Stomach (tissue), 19 donors: ENCODE measurements at regions of chr4 and their contacts with region 1.

Region 1: GRCh38 chr4:145939856-145940255 is 1.2 kb upstream of the ZNF827 start:
- DNase-seq: no peak
- H3K4me3 ChIP-seq: no peak overlapping the region
- H3K27ac ChIP-seq: no peak overlapping the region
- H3K4me1 ChIP-seq: peaks cover 7 to 23% (median 16%) of the 10 kb centered on the region in 4 donors
- H3K27me3 ChIP-seq: no peaks in the 10 kb centered on the region
- CTCF ChIP-seq: no peak
- EP300 ChIP-seq: no peak
- POLR2A ChIP-seq: no peak

Region 2: GRCh38 chr4:145840162-145840768 is 99.6 kb before region 1 on chr4:
- intact Hi-C with region 1: loop called (anchors 10 kb)
- DNase-seq: peak in 1 of 2 donors; percentile 62
- H3K4me3 ChIP-seq: no peak overlapping the region
- H3K27ac ChIP-seq: no peak overlapping the region
- H3K4me1 ChIP-seq: no peaks in the 10 kb centered on the region
- H3K27me3 ChIP-seq: no peaks in the 10 kb centered on the region
- CTCF ChIP-seq: peak in 5 of 7 experiments; percentile 18 to 54 (median 30)
- EP300 ChIP-seq: no peak
- POLR2A ChIP-seq: no peak